MCF 10A (cell line): ENCODE measurements at regions of chr1 and their contacts with region 1.

Region 1: GRCh38 chr1:168637350-168637991 is 61.1 kb downstream of the XCL1 start:
- DNase-seq: peak; percentile 64
- H3K4me3 Mint-ChIP-seq: peak overlapping the region; percentile 38
- H3K27ac Mint-ChIP-seq: peak overlapping the region; percentile 84
- H3K4me1 Mint-ChIP-seq: peaks cover 25% of the 10 kb centered on the region
- H3K27me3 Mint-ChIP-seq: no peaks in the 10 kb centered on the region
- CTCF ChIP-seq: peak; percentile 86

Region 2: GRCh38 chr1:168653567-168653966 is 16.1 kb after region 1 on chr1:
- CTCF ChIA-PET with region 1: interaction called, 35 read pairs
- POLR2A ChIA-PET with region 1: interaction called, 4 read pairs
- intact Hi-C with region 1: no loop called
- DNase-seq: peak; percentile 61
- H3K4me3 Mint-ChIP-seq: no peak overlapping the region
- H3K27ac Mint-ChIP-seq: peak overlapping the region; percentile 1
- H3K4me1 Mint-ChIP-seq: peaks cover 20% of the 10 kb centered on the region
- H3K27me3 Mint-ChIP-seq: no peaks in the 10 kb centered on the region
- CTCF ChIP-seq: no peak

Region 3: GRCh38 chr1:168763031-168763430 is 125.6 kb after region 1 on chr1:
- CTCF ChIA-PET with region 1: interaction called, 10 read pairs
- POLR2A ChIA-PET with region 1: interaction called, 10 read pairs
- intact Hi-C with region 1: no loop called
- DNase-seq: peak; percentile 35
- H3K4me3 Mint-ChIP-seq: no peak overlapping the region
- H3K27ac Mint-ChIP-seq: no peak overlapping the region
- H3K4me1 Mint-ChIP-seq: peaks cover 22% of the 10 kb centered on the region
- H3K27me3 Mint-ChIP-seq: no peaks in the 10 kb centered on the region
- CTCF ChIP-seq: no peak

Region 4: DNA sequence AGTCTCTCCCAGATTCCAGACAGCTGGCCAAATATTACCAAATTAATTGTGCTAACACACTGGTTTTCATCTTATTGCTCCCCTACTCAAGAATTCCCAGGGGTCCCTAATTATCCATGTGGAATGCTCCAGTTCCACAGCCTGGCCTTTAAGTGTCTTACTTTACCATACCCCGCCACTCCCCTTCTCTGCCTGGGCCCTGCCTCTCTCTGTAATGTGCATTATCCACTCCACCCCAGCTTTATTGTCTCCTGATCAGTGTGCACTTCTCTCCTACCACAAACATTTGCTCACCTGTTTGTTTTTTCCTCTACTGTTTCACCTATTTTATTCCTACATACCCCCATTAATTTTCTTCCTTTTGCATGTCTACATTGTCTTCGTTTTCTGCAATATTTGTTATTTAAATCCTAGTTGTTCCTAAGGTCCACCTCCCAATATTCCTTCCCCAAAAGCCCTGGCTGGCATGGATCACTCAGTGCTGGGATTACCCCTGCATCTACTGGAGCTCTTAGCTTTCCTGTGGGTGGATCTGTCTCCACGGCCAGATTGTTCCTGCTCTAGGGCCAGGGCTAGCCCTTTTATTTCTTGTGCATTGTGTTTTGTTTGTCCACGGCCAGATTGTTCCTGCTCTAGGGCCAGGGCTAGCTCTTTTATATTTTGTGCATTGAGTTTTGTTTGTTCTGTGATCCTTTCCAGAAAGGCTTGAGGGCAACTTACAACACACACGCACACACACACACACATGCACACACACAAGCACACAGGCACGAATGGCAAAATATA is 435.7 kb after region 1 on chr1:
- CTCF ChIA-PET with region 1: interaction called, 12 read pairs
- POLR2A ChIA-PET with region 1: no interaction called
- intact Hi-C with region 1: no loop called
- DNase-seq: no peak
- H3K4me3 Mint-ChIP-seq: no peak overlapping the region
- H3K27ac Mint-ChIP-seq: no peak overlapping the region
- H3K4me1 Mint-ChIP-seq: no peaks in the 10 kb centered on the region
- H3K27me3 Mint-ChIP-seq: no peaks in the 10 kb centered on the region
- CTCF ChIP-seq: no peak

Region 5: DNA sequence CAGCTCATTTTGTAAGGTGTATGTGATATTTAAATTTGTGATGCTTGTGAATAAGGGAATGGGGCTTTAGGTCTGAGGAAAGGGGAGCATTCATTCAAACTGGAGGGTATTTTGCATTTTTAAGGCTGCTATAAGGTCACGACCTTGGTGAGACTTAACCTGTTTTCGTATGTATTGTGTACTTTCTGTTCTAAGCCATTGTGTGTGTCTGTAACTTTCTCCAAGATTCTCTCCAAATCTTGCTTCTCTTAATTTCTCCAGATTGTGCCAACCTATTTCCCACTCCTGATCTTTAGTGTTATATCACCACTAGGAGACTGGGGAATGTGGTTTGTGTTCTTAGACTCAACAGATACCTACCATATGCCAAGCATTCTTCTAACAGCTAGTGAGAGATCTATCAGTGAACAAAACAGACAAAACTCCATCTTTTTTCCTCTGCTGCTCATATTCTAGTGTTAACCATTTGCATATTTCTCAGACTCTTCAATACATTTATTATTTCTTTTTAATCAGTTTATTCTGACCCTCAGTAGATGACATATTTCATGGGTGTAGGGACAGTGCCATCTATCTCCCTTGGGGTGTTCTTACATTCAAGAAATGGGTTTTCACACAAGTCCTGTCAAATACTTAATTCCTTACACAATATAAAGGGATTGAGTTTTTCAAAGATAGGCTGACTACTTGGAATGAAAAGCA is 496.5 kb after region 1 on chr1:
- CTCF ChIA-PET with region 1: interaction called, 19 read pairs
- POLR2A ChIA-PET with region 1: interaction called, 7 read pairs
- intact Hi-C with region 1: loop called (anchors 1 kb)
- DNase-seq: peak; percentile 32
- H3K4me3 Mint-ChIP-seq: no peak overlapping the region
- H3K27ac Mint-ChIP-seq: no peak overlapping the region
- H3K4me1 Mint-ChIP-seq: peaks cover 24% of the 10 kb centered on the region
- H3K27me3 Mint-ChIP-seq: no peaks in the 10 kb centered on the region
- CTCF ChIP-seq: peak; percentile 35

Region 6: DNA sequence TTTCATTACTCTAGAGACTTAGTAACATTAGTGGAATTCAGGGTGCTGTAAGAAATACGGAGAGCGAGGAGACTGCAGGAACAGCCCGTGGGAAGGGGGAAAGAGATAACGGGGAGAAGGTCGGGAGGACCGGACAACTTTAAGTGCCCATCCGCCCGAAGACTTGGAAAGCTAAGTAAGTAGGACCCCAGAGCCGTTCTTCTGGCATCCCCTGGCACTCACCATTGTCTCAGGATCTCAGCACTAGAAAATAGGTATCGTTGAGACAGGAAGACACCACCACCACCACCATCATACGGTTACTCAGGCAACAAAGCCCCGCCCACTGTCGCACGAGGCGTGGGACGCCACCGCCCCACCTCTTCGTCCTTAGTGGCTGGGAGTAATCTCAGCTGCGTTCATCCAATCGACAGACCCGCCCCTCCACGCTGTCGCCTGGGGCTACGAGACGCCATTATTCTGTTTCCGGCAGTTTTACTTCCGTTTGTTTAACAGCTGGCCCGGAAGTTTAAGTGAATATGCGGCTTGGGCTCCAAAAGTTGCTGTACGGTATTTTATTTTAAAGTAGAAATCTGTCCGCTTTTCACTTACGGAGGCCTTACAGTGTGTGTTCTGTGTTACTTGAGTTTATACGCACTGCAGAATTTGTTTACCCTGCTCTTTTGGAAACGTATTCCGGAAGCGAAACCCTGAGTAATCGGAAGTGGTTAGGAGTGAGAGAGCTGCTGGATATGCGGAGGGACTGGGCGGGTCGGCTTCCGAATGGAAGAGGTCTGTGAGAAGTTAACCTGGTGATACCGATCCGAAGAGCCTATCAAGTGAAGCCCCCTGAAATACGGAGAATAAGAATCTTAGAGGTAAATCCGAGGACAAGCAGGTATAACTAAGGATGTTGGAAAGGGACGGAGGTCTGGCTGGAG is 730.3 kb after region 1 on chr1 and contains the starts of genes BLZF1 and NME7:
- CTCF ChIA-PET with region 1: no interaction called
- POLR2A ChIA-PET with region 1: interaction called, 7 read pairs
- intact Hi-C with region 1: loop called (anchors 5 kb)
- DNase-seq: peak; percentile 99
- H3K4me3 Mint-ChIP-seq: no peak within 1 kb of the TSS
- H3K27ac Mint-ChIP-seq: no peak within 1 kb of the TSS
- H3K4me1 Mint-ChIP-seq: peaks cover 24% of the 10 kb centered on the region
- H3K27me3 Mint-ChIP-seq: no peaks in the 10 kb centered on the region
- CTCF ChIP-seq: no peak
- total RNA-seq, gene BLZF1: 57.8 and 66.1 TPM in 2 replicates
- total RNA-seq, gene NME7: 36.5 and 46.8 TPM in 2 replicates